GM10248 (cell line): ENCODE measurements at regions of chr19 and their contacts with region 1.

Region 1: GRCh38 chr19:47225746-47226425 is 5.1 kb downstream of the BBC3 start:
- DNase-seq: peak; percentile 94
- CTCF ChIP-seq: peak; percentile 34

Region 2: GRCh38 chr19:47112997-47113849 is 112.7 kb before region 1 on chr19 and contains the start of gene ZC3H4:
- CTCF ChIA-PET with region 1: no interaction called
- POLR2A ChIA-PET with region 1: interaction called, 14 read pairs
- DNase-seq: peak; percentile 98
- CTCF ChIP-seq: no peak

Region 3: GRCh38 chr19:47190167-47190727 is 35.6 kb before region 1 on chr19:
- CTCF ChIA-PET with region 1: interaction called, 5 read pairs
- POLR2A ChIA-PET with region 1: interaction called, 22 read pairs
- DNase-seq: no peak
- CTCF ChIP-seq: no peak

Region 4: GRCh38 chr19:47203254-47203653 is 22.6 kb before region 1 on chr19:
- CTCF ChIA-PET with region 1: interaction called, 7 read pairs
- POLR2A ChIA-PET with region 1: interaction called, 22 read pairs
- DNase-seq: no peak
- CTCF ChIP-seq: no peak

Region 5: DNA sequence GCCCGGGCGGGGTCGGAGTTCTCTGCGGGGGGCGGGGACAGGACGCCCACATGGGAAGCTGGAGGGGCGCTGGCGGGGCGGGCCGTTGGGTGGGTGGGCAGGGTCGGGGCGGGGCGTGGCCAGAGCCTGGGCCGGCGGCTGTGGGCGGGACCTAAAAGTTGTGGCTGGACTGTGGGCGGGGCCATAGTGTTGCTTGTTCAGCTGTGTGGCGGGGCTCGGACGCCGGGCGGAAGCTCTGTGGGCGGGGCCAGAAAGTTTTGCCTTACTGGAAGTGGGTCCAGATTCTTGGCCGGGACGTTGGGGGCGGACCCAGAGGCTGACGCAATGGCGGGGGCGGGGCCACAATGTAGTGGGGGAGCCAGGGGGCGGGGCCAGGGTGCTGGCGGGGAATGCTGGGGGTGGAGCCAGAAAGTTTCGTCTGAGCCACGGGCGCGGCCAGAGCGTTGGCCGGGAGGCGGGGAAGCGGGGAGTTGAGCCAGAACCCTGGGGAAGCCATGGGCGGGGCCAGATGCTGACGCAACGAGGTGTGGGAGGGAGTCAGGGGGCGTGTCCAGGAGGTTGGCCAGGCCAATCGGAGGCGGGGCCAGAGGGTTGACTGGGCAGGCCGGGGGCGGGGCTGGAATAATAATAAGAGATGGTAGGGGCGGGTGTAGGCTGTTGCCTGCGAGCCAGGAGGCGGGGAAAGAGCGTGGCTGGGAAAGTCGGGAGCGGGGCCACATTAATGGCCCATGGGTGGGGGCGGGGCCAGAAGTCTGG is 31.0 kb after region 1 on chr19:
- CTCF ChIA-PET with region 1: interaction called, 4 read pairs
- POLR2A ChIA-PET with region 1: interaction called, 23 read pairs
- DNase-seq: peak; percentile 99
- CTCF ChIP-seq: no peak

Region 6: GRCh38 chr19:47273313-47273977 is 47.6 kb after region 1 on chr19:
- CTCF ChIA-PET with region 1: no interaction called
- POLR2A ChIA-PET with region 1: interaction called, 22 read pairs
- DNase-seq: peak; percentile 93
- CTCF ChIP-seq: no peak